ENCODE measurements at regions of chr12 and their contacts with region 1.

Region 1: GRCh38 chr12:113980537-113981337 is 14.6 kb upstream of the RBM19 start:
- DNase-seq: peak; percentile 47
- ATAC-seq: peak; percentile 72
- H3K4me3 ChIP-seq: no peak overlapping the region
- H3K27ac ChIP-seq: no peak overlapping the region
- H3K4me1 ChIP-seq: peaks cover 19% of the 10 kb centered on the region; the same call in 1 of the 2 replicates
- H3K27me3 ChIP-seq: no peaks in the 10 kb centered on the region
- CTCF ChIP-seq: peak; percentile 90
- EP300 ChIP-seq: no peak
- POLR2A ChIP-seq: no peak
- RAD21 ChIP-seq: peak; percentile 91

Region 2: DNA sequence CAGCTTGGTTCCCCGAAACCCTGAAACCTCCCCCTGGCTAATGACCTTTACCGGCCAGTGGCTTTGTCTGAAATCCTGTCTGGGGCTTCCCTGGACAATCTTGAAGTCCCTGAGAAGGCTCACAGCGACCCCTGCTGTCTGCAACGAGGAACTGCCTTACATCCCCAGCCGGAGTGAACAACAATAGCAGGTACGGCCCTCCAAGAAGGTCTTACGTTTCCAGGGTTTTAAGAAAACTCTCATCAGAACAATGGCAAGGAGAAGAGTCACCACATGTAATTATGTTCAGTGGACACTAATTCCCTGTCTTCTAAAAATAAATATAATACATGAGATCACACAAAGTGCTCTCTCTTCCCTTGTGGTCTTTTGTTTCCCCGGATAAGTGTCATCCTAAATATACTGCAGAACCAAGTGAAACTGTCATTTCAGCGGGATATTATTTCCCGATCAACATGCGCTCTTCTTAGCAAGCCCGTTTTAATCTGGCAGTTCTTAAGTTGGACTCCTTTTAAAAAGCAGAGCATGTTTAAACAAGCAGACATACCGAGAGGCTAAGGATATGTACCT is 67.9 kb before region 1 on chr12:
- CTCF ChIA-PET with region 1: no interaction called
- POLR2A ChIA-PET with region 1: no interaction called
- in situ Hi-C with region 1: no loop called
- intact Hi-C with region 1: no loop called
- DNase-seq: peak; percentile 50
- ATAC-seq: peak; percentile 77
- H3K4me3 ChIP-seq: no peak overlapping the region
- H3K27ac ChIP-seq: no peak overlapping the region
- H3K4me1 ChIP-seq: no peaks in the 10 kb centered on the region
- H3K27me3 ChIP-seq: no peaks in the 10 kb centered on the region
- CTCF ChIP-seq: peak; percentile 90
- EP300 ChIP-seq: no peak
- POLR2A ChIP-seq: no peak
- RAD21 ChIP-seq: peak; percentile 70

Region 3: DNA sequence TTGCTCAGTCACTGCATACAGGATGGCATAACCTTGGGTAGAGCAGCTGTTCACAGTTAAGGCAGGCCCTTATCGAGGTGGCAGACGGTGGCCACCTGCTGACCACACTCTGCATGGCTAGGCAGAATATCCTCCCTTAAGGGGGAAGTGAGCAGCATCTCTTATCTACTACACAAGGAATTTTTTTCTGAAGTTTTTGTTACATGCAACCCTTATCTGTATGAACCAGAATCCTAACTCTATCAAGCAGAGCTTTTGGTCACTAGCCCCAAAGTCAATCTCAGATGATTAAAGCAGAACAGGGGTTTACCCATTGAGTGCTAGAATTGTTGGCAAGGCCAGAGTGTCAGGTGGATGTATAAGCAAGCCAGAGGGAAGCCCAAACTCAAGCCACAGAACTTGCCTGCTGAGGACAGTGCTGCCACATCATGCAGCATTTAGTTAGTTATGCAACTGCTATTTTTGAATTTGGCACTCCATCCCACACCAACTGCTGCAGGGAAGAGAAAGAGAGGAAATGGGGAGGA is 232.4 kb after region 1 on chr12:
- CTCF ChIA-PET with region 1: interaction called, 3 read pairs
- POLR2A ChIA-PET with region 1: no interaction called
- in situ Hi-C with region 1: loop called (anchors 10 kb)
- intact Hi-C with region 1: loop called (anchors 2 kb)
- DNase-seq: no peak
- ATAC-seq: peak; percentile 68
- H3K4me3 ChIP-seq: no peak overlapping the region
- H3K27ac ChIP-seq: no peak overlapping the region
- H3K4me1 ChIP-seq: no peaks in the 10 kb centered on the region
- H3K27me3 ChIP-seq: no peaks in the 10 kb centered on the region
- CTCF ChIP-seq: peak; percentile 32; the same call in 1 of the 2 replicates
- EP300 ChIP-seq: no peak
- POLR2A ChIP-seq: no peak
- RAD21 ChIP-seq: no peak

Region 4: DNA sequence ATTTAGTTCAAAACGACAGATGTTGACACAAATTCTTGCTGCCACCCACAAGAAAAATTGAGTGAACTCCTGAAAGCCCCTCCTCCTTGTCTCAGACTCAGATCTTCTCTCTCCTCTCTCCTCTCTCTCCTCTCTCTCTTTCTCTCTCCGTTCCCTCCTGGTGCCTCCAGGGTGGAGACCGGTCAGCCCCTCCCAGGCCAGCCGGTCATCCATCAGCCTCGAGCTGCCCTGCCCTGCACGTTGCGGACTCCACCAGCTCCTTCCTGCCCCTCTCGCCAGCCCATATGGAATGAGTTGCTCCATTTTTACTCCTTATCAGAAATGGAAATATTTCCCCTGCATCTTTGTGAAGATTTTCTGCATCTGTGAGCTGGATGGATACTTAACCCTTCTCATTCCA is 321.4 kb after region 1 on chr12:
- CTCF ChIA-PET with region 1: no interaction called
- POLR2A ChIA-PET with region 1: no interaction called
- in situ Hi-C with region 1: no loop called
- intact Hi-C with region 1: no loop called
- DNase-seq: no peak
- ATAC-seq: no peak
- H3K4me3 ChIP-seq: no peak overlapping the region
- H3K27ac ChIP-seq: no peak overlapping the region
- H3K4me1 ChIP-seq: no peaks in the 10 kb centered on the region
- H3K27me3 ChIP-seq: no peaks in the 10 kb centered on the region; a peak in 2 of 5 replicates
- CTCF ChIP-seq: no peak
- EP300 ChIP-seq: no peak
- POLR2A ChIP-seq: no peak
- RAD21 ChIP-seq: no peak

Region 5: GRCh38 chr12:114476159-114476558 is 495.4 kb after region 1 on chr12:
- CTCF ChIA-PET with region 1: interaction called, 12 read pairs
- POLR2A ChIA-PET with region 1: no interaction called
- in situ Hi-C with region 1: loop called (anchors 10 kb)
- intact Hi-C with region 1: loop called (anchors 1 kb)
- DNase-seq: peak; percentile 40
- ATAC-seq: peak; percentile 40; the same call in 1 of the 3 replicates
- H3K4me3 ChIP-seq: no peak overlapping the region
- H3K27ac ChIP-seq: no peak overlapping the region
- H3K4me1 ChIP-seq: no peaks in the 10 kb centered on the region
- H3K27me3 ChIP-seq: peaks cover 2 to 38% of the 10 kb centered on the region in 2 experiments; a peak in 4 of 5 replicates
- CTCF ChIP-seq: peak; percentile 48
- EP300 ChIP-seq: no peak
- POLR2A ChIP-seq: no peak
- RAD21 ChIP-seq: no peak; the same call in 1 of the 2 replicates

Region 6: GRCh38 chr12:114508529-114509129 is 527.9 kb after region 1 on chr12:
- CTCF ChIA-PET with region 1: interaction called, 24 read pairs
- POLR2A ChIA-PET with region 1: no interaction called
- in situ Hi-C with region 1: loop called (anchors 10 kb)
- intact Hi-C with region 1: loop called (anchors 1 kb)
- DNase-seq: peak; percentile 71
- ATAC-seq: peak; percentile 73
- H3K4me3 ChIP-seq: no peak overlapping the region
- H3K27ac ChIP-seq: no peak overlapping the region
- H3K4me1 ChIP-seq: no peaks in the 10 kb centered on the region
- H3K27me3 ChIP-seq: peaks cover 0 to 12% of the 10 kb centered on the region in 2 experiments; a peak in 1 of 5 replicates
- CTCF ChIP-seq: peak; percentile 85
- EP300 ChIP-seq: no peak
- POLR2A ChIP-seq: no peak
- RAD21 ChIP-seq: peak; percentile 53; the same call in 1 of the 2 replicates

Region 7: DNA sequence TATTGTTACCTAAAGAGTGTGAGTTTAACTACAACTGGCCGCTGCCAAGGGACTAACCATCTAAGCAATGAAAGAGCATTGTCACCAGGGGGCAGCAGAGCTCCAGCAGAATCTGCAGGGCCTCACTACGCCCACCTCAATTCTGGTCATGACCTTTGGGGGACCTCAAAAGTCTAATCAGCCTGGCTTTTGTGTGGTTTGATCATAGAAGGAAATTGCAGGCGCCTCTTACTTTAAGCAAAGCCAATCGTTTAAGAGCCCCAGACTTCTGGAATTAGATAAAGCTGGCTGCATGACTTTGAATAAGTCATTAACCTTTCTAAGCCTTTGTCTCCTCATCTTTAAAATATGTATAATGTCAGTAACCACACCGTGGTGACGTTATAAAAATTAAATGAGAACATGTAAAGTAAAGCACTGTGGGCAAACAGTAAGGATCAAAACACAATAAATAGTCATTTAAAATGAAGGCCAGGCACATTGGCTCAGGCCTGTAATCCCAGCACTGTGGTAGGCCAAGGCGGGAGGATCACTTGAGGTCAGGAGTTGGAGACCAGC is 644.6 kb after region 1 on chr12:
- CTCF ChIA-PET with region 1: no interaction called
- POLR2A ChIA-PET with region 1: no interaction called
- in situ Hi-C with region 1: no loop called
- intact Hi-C with region 1: no loop called
- DNase-seq: peak; percentile 74
- ATAC-seq: peak; percentile 95
- H3K4me3 ChIP-seq: no peak overlapping the region
- H3K27ac ChIP-seq: no peak overlapping the region
- H3K4me1 ChIP-seq: peaks cover 35% of the 10 kb centered on the region
- H3K27me3 ChIP-seq: no peaks in the 10 kb centered on the region
- CTCF ChIP-seq: peak; percentile 92
- EP300 ChIP-seq: no peak
- POLR2A ChIP-seq: no peak
- RAD21 ChIP-seq: peak; percentile 90

Region 8: GRCh38 chr12:115916910-115917668 is 1936.4 kb after region 1 on chr12:
- CTCF ChIA-PET with region 1: no interaction called
- POLR2A ChIA-PET with region 1: no interaction called
- in situ Hi-C with region 1: loop called (anchors 25 kb)
- intact Hi-C with region 1: no loop called
- DNase-seq: peak; percentile 13
- ATAC-seq: peak; percentile 95
- H3K4me3 ChIP-seq: peak overlapping the region in 1 of 3 experiments; percentile 46; a peak in 1 of 6 replicates
- H3K27ac ChIP-seq: no peak overlapping the region
- H3K4me1 ChIP-seq: peaks cover 20% of the 10 kb centered on the region
- H3K27me3 ChIP-seq: no peaks in the 10 kb centered on the region
- CTCF ChIP-seq: peak; percentile 94
- EP300 ChIP-seq: no peak
- POLR2A ChIP-seq: no peak
- RAD21 ChIP-seq: peak; percentile 96

Measured in HepG2 (cell line).